Activated CD8-positive, alpha-beta T cell treated with anti-CD3 and anti-CD28 coated beads for 36 hours (primary cell): ENCODE measurements at regions of chr16 and their contacts with region 1.

Region 1: GRCh38 chr16:17359788-17360390 is 110.9 kb downstream of the XYLT1 start:
- DNase-seq: peak; percentile 86
- ATAC-seq: peak; percentile 76
- H3K4me3 Mint-ChIP-seq: peak overlapping the region; percentile 5
- H3K27ac Mint-ChIP-seq: peak overlapping the region; percentile 82
- H3K4me1 Mint-ChIP-seq: peaks cover 64% of the 10 kb centered on the region
- H3K27me3 Mint-ChIP-seq: no peaks in the 10 kb centered on the region
- CTCF ChIP-seq: no peak

Region 2: GRCh38 chr16:17345043-17345442 is 14.8 kb before region 1 on chr16:
- CTCF ChIA-PET with region 1: interaction called, 10 read pairs
- POLR2A ChIA-PET with region 1: interaction called, 25 read pairs
- intact Hi-C with region 1: no loop called
- DNase-seq: peak; percentile 44
- ATAC-seq: no peak
- H3K4me3 Mint-ChIP-seq: no peak overlapping the region
- H3K27ac Mint-ChIP-seq: peak overlapping the region; percentile 70
- H3K4me1 Mint-ChIP-seq: peaks cover 76% of the 10 kb centered on the region
- H3K27me3 Mint-ChIP-seq: no peaks in the 10 kb centered on the region
- CTCF ChIP-seq: no peak

Region 3: GRCh38 chr16:17387256-17387655 is 27.4 kb after region 1 on chr16:
- CTCF ChIA-PET with region 1: no interaction called
- POLR2A ChIA-PET with region 1: no interaction called
- intact Hi-C with region 1: no loop called
- DNase-seq: no peak
- ATAC-seq: no peak
- H3K4me3 Mint-ChIP-seq: no peak overlapping the region
- H3K27ac Mint-ChIP-seq: no peak overlapping the region
- H3K4me1 Mint-ChIP-seq: peaks cover 26% of the 10 kb centered on the region
- H3K27me3 Mint-ChIP-seq: no peaks in the 10 kb centered on the region
- CTCF ChIP-seq: no peak

Region 4: DNA sequence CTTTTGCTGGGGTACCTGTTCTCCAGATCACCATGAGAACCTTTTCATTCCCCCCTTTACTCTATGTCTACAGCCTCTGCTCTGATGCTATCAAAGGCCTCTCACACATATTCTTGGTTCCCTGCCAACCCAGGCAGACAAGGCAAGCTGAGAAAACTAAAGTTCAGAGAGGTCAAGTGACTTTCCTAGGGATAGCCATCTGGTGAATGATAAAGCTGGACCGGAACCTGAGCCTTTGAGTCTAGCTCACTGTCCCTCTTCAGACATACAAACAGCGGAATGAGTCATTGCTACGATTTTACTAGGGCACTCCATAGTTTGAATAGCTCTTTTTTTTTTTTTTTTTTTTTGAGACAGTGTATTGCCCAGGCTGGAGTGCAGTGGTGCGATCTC is 37.6 kb after region 1 on chr16:
- CTCF ChIA-PET with region 1: no interaction called
- POLR2A ChIA-PET with region 1: no interaction called
- intact Hi-C with region 1: no loop called
- DNase-seq: no peak
- ATAC-seq: no peak
- H3K4me3 Mint-ChIP-seq: no peak overlapping the region
- H3K27ac Mint-ChIP-seq: no peak overlapping the region
- H3K4me1 Mint-ChIP-seq: peaks cover 23% of the 10 kb centered on the region
- H3K27me3 Mint-ChIP-seq: no peaks in the 10 kb centered on the region
- CTCF ChIP-seq: no peak